ENCODE measurements at regions of chr5 and their contacts with region 1.

Region 1: DNA sequence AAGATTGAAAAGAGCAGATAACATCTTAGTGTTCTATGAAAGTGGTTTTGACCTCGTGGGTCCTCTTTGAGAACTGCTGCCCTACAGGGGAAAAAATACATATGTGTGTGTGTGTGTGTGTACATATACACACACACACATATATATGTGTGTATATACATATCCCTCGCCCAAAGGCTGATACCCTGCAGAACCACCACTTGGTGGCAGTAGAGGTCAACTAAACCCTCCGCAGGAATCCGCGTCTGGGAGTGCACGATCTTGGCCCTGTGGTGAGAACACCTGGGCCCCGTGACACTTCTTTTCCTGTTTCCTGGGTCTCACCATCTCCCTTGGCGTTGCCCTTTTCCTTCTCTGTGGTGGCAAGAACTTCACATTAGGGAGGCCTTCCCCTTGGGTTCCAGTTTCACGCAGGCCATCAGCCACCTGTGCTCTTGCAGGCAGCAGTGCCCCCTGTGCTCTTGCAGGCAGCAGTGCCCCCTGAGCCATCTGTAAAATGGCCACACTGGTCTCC is 8.2 kb downstream of the IL9 start:
- DNase-seq: no peak

Region 2: GRCh38 chr5:135651150-135651549 is 236.3 kb before region 1 on chr5:
- intact Hi-C with region 1: no loop called
- DNase-seq: no peak

Region 3: GRCh38 chr5:135915466-135916001 is 28.1 kb after region 1 on chr5:
- intact Hi-C with region 1: loop called (anchors 1 kb)
- DNase-seq: no peak

Region 4: GRCh38 chr5:135934939-135935338 is 47.5 kb after region 1 on chr5:
- intact Hi-C with region 1: loop called (anchors 5 kb)
- DNase-seq: no peak

Region 5: DNA sequence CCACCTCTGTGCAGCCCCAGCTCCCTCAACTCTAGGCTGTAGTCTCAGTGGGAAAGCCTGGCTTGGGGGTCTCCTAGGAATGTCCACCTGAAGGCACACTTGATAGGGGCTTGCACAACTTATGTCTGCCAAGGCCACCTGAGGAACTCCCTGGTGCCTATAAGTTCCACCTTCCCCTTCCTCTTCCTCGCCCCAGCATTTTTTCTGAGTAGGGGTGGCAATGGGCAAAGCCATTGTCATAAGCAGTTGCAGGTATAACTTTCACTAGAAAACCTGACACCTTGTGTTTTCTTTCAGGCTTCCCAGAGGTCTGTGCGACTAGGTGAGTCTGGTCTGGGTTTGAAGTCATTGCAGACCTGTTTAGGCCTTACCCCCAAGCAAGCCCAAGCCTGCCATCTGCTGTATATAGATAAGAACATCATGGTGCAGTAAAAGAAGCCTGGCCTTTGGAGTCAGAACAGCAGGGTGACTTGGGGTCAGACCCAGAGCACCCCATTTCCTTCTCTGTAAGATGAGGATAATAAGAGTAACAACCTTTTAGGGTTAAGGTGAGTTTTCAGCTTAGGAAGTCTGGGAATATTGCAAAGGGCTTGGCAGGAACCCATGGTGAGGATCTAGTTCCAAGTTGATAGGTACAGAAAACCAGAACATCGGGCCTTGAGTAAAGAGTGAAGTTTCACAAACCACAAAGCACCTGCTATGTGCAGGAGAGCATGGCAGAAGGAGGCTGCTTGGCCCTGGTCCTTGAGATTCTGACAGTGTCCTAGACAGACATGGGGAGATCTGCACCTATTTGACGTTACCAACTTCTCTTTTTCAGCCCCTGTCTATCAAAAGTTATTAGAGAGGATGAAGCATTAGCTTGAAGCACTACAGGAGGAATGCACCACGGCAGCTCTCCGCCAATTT is 175.2 kb after region 1 on chr5:
- intact Hi-C with region 1: loop called (anchors 5 kb)
- DNase-seq: no peak

Region 6: DNA sequence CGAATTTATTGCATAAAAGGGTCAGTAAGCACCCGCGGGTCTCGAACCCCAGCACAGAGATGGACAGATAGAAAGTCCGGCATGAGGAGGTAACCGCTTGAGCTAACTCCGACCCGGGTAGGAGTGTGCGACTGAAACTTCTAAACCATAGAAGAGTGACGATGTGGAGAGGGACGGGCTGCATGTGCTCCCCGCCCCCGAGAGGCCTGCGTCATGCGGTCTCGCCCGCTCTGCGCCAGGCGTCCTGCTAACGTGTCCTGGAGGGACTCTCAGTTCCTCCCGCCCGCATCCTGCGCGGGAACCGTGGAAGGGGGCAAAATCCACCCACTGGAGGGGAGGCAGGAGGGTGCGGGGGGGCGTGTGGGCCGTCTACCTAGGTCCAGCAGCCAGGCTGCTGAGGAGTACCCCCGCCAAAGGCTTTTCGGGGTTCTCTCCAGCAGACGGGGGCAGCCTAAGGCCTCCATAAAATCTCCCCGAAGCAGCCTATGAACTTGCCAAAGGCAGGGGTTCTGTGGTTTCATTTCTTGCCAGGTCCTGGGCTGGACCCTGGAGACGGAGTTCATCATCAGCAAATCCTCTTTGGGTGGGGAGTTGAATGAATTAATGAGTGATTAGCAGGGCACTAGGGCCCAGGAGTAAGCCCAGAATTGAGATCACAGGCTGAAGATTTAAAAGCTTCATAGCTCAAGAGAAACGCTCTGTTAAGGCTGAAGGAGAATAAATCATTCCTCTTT is 193.2 kb after region 1 on chr5:
- intact Hi-C with region 1: loop called (anchors 5 kb)
- DNase-seq: peak; percentile 90

Region 7: GRCh38 chr5:136212252-136212721 is 324.9 kb after region 1 on chr5:
- intact Hi-C with region 1: loop called (anchors 2 kb)
- DNase-seq: no peak